Caco-2 (cell line): ENCODE measurements at regions of chr6 and their contacts with region 1.

Region 1: GRCh38 chr6:37018198-37019064 is 13.0 kb downstream of the FGD2 start:
- DNase-seq: peak; percentile 87 to 90
- H3K4me3 ChIP-seq: no peak overlapping the region
- H3K4me3 Mint-ChIP-seq: no peak overlapping the region
- H3K27ac Mint-ChIP-seq: no peak overlapping the region
- H3K4me1 ChIP-seq: peaks cover 15% of the 10 kb centered on the region
- H3K4me1 Mint-ChIP-seq: peaks cover 24% of the 10 kb centered on the region
- H3K27me3 ChIP-seq: no peaks in the 10 kb centered on the region
- H3K27me3 Mint-ChIP-seq: no peaks in the 10 kb centered on the region
- CTCF ChIP-seq: peak; percentile 85 to 96

Region 2: DNA sequence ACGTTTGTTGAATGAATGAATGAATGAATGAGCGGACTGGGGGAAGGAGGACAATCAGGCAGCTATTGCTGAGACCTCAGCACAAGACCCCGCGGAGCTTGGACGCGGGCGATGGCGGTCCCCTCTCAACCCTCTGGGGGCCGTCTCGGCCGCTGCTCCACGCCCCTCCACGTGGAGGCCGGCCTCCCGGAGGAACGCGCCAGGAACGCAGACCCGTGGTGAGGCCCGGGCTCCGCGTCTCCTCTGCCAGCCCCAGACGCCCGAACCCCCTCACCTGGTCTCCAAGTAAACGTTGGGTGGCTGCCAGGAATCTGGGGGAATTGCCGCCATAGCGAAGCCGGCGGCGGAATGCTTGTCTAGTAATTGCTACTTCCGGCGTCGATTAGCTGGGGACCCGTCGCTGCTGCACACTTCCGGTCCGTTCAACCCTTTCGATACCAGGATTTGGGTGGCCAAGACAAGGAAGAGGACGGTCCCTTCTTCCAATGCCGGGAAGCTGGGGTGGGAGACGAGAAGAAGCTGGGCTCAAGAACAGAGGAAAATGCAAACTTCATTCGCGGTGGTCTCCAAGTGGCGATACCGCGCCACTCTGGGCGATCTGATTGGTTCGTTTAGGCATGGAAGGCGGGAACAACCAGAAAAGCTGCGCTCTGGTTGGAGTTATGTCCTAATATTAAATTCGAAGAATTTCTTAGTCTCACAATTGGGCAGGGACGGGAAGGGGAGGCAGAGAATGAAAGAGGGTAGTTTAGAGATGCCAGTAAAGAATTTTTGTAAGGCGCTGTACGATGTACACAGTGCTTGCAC is 143.8 kb before region 1 on chr6 and contains the start of gene PPIL1:
- CTCF ChIA-PET with region 1: interaction called, 19 read pairs
- POLR2A ChIA-PET with region 1: interaction called, 3 read pairs
- intact Hi-C with region 1: no loop called
- DNase-seq: peak; percentile 83 to 85
- H3K4me3 ChIP-seq: peak within 1 kb of the TSS; percentile 78
- H3K4me3 Mint-ChIP-seq: peak within 1 kb of the TSS; percentile 92
- H3K27ac Mint-ChIP-seq: peak within 1 kb of the TSS; percentile 98
- H3K4me1 ChIP-seq: 0 out of 2 replicates have a peak, but pooled peaks cover 5% of the 10 kb centered on the region
- H3K4me1 Mint-ChIP-seq: peaks cover 8% of the 10 kb centered on the region
- H3K27me3 ChIP-seq: no peaks in the 10 kb centered on the region
- H3K27me3 Mint-ChIP-seq: no peaks in the 10 kb centered on the region
- CTCF ChIP-seq: peak in 1 of 2 experiments; percentile 14
- total RNA-seq, gene PPIL1: 57.7 and 61.2 TPM in 2 replicates

Region 3: GRCh38 chr6:36912586-36912985 is 105.8 kb before region 1 on chr6:
- CTCF ChIA-PET with region 1: interaction called, 21 read pairs
- POLR2A ChIA-PET with region 1: no interaction called
- intact Hi-C with region 1: no loop called
- DNase-seq: no peak
- H3K4me3 ChIP-seq: no peak overlapping the region
- H3K4me3 Mint-ChIP-seq: no peak overlapping the region
- H3K27ac Mint-ChIP-seq: no peak overlapping the region
- H3K4me1 ChIP-seq: peaks cover 16% of the 10 kb centered on the region
- H3K4me1 Mint-ChIP-seq: peaks cover 7% of the 10 kb centered on the region
- H3K27me3 ChIP-seq: no peaks in the 10 kb centered on the region
- H3K27me3 Mint-ChIP-seq: no peaks in the 10 kb centered on the region
- CTCF ChIP-seq: no peak

Region 4: DNA sequence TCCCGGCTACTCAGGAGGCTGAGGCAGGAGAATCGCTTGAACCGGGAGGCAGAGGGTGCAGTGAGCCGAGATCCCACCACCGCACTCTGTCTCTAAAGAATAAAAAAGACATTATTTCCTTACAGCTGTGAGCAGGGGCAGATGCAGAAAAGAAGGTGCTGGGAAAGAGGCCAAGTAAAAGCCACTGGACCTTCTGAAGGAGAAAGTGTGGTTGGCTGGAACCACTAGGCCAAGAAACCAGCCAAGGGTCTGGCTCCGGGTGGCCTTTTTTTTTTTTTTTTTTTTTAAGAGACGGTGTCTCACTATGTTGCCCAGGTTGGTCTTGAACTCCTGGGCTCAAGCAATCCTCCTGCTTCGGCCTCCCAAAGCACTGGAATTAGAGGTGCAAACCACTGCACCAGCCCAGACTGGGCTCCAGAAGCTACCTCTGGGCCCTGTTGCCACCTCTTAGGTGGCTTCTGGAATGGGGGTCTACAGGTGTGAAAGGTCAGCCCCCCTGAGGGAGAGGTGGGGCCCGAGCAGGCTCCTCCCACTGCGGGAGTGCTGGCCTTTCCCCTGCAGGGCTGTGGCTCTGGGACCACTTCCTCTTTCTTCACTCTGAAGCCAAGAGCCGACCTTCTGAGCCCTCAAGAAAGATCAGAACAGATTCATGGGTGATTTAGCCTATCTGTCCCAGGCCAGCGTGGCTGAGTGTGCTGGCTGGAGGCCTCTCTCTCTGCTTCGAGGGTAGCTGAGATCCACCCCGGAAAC is 13.2 kb before region 1 on chr6 and contains the start of gene FGD2:
- CTCF ChIA-PET with region 1: interaction called, 12 read pairs
- POLR2A ChIA-PET with region 1: interaction called, 8 read pairs
- intact Hi-C with region 1: no loop called
- DNase-seq: no peak
- H3K4me3 ChIP-seq: no peak within 1 kb of the TSS
- H3K4me3 Mint-ChIP-seq: no peak within 1 kb of the TSS
- H3K27ac Mint-ChIP-seq: no peak within 1 kb of the TSS
- H3K4me1 ChIP-seq: no peaks in the 10 kb centered on the region
- H3K4me1 Mint-ChIP-seq: no peaks in the 10 kb centered on the region
- H3K27me3 ChIP-seq: no peaks in the 10 kb centered on the region
- H3K27me3 Mint-ChIP-seq: no peaks in the 10 kb centered on the region
- CTCF ChIP-seq: no peak
- total RNA-seq, gene FGD2: not detected in 2 replicates

Region 5: GRCh38 chr6:37149745-37150144 is 131.3 kb after region 1 on chr6:
- CTCF ChIA-PET with region 1: no interaction called
- POLR2A ChIA-PET with region 1: no interaction called
- intact Hi-C with region 1: no loop called
- DNase-seq: no peak
- H3K4me3 ChIP-seq: no peak overlapping the region
- H3K4me3 Mint-ChIP-seq: no peak overlapping the region
- H3K27ac Mint-ChIP-seq: no peak overlapping the region
- H3K4me1 ChIP-seq: peaks cover 44% of the 10 kb centered on the region
- H3K4me1 Mint-ChIP-seq: peaks cover 19% of the 10 kb centered on the region
- H3K27me3 ChIP-seq: no peaks in the 10 kb centered on the region
- H3K27me3 Mint-ChIP-seq: no peaks in the 10 kb centered on the region
- CTCF ChIP-seq: no peak

Region 6: GRCh38 chr6:37169496-37170272 is 151.3 kb after region 1 on chr6 and contains the start of gene PIM1:
- CTCF ChIA-PET with region 1: interaction called, 12 read pairs
- POLR2A ChIA-PET with region 1: interaction called, 3 read pairs
- intact Hi-C with region 1: loop called (anchors 1 kb)
- DNase-seq: peak; percentile 97 to 99
- H3K4me3 ChIP-seq: peak within 1 kb of the TSS; percentile 82
- H3K4me3 Mint-ChIP-seq: peak within 1 kb of the TSS; percentile 88
- H3K27ac Mint-ChIP-seq: peak within 1 kb of the TSS; percentile 98
- H3K4me1 ChIP-seq: peaks cover 10% of the 10 kb centered on the region; the same call in 1 of the 2 replicates
- H3K4me1 Mint-ChIP-seq: peaks cover 14% of the 10 kb centered on the region
- H3K27me3 ChIP-seq: no peaks in the 10 kb centered on the region
- H3K27me3 Mint-ChIP-seq: no peaks in the 10 kb centered on the region
- CTCF ChIP-seq: no peak
- total RNA-seq, gene PIM1: 43.8 and 48.3 TPM in 2 replicates

Region 7: GRCh38 chr6:37303932-37304363 is 285.5 kb after region 1 on chr6:
- CTCF ChIA-PET with region 1: no interaction called
- POLR2A ChIA-PET with region 1: no interaction called
- intact Hi-C with region 1: loop called (anchors 5 kb)
- DNase-seq: peak in 1 of 2 experiments; percentile 27
- H3K4me3 ChIP-seq: no peak overlapping the region
- H3K4me3 Mint-ChIP-seq: no peak overlapping the region
- H3K27ac Mint-ChIP-seq: no peak overlapping the region
- H3K4me1 ChIP-seq: peaks cover 14% of the 10 kb centered on the region
- H3K4me1 Mint-ChIP-seq: peaks cover 17% of the 10 kb centered on the region
- H3K27me3 ChIP-seq: no peaks in the 10 kb centered on the region
- H3K27me3 Mint-ChIP-seq: no peaks in the 10 kb centered on the region
- CTCF ChIP-seq: peak; percentile 45 to 54